Heart left ventricle (tissue), 16 donors: ENCODE measurements at regions of chr14 and their contacts with region 1.

Region 1: DNA sequence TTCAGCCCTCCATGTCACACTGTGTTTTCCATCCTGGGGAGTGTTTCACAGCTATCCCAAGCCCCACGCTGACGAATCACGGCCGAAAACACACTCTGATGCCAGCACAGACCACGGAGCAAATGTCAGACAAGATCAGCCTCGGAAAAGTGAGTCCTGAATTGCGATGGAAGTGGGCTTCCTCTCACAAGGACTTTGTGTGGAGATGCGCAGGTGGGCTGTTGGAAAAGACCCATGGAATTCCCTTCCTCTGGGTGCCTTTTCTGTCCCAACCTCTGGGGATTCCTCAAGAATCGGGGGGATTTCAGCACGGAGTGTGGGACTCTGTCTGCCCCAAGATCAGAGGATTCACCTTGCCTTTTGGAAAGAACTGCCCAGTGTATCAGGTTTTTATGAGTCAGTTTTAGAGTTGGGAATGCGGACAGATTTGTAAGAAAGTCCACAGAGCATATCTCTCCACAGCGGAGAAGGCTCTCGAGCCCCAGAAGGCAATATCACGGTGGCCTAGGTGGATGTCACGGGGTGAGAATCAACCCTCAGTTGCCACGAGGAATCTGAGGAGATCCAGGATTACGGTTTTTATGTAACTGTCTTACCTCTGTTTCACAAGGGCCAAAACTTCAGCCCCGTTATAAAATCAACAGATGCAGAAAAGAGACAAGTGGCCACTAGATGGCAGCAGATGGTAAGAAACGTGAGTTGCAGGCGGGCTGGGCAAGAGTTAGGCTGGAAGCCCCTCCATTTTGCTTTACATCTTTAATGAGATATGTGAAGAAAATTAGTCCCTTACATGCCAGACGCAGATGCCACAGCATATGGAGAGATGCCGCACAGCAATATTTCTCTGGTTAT is 201.9 kb downstream of the DAD1 start:
- DNase-seq: peak in 4 of 5 donors; percentile 56 to 66 (median 60)
- ATAC-seq: peak in 3 of 4 donors; percentile 50 to 66 (median 60)
- H3K4me3 ChIP-seq: no peak overlapping the region
- H3K27ac ChIP-seq: no peak overlapping the region
- H3K4me1 ChIP-seq: peaks cover 0 to 8% (median 0%) of the 10 kb centered on the region in 12 donors
- H3K27me3 ChIP-seq: peaks cover 0 to 29% (median 0%) of the 10 kb centered on the region in 9 donors
- CTCF ChIP-seq: peak; percentile 67 to 90 (median 84)
- POLR2A ChIP-seq: no peak

Region 2: DNA sequence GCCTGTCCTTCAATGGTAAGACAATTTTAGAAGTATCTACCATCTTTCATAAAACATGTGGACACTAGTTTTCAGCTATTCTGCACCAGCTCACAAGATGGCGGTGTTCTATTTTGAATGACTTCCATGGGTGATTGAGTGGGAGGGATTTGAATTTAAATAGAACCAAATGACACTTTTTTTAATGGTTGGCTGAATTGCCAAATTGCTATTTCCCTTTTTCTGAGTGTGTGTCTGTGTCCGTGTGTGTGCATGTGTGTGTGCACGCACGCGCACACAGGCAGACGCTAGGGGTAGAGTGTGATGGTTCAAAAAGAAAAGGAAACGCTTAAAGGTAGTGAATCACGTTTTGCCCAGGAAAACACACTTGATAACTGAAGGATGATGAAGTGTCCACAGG is 160.8 kb before region 1 on chr14:
- intact Hi-C with region 1: no loop called
- DNase-seq: no peak
- ATAC-seq: no peak
- H3K4me3 ChIP-seq: no peak overlapping the region
- H3K27ac ChIP-seq: no peak overlapping the region
- H3K4me1 ChIP-seq: no peaks in the 10 kb centered on the region
- H3K27me3 ChIP-seq: peaks cover 0 to 8% (median 0%) of the 10 kb centered on the region in 9 donors
- CTCF ChIP-seq: peak in 2 of 12 donors; percentile 17 to 26
- POLR2A ChIP-seq: no peak

Region 3: DNA sequence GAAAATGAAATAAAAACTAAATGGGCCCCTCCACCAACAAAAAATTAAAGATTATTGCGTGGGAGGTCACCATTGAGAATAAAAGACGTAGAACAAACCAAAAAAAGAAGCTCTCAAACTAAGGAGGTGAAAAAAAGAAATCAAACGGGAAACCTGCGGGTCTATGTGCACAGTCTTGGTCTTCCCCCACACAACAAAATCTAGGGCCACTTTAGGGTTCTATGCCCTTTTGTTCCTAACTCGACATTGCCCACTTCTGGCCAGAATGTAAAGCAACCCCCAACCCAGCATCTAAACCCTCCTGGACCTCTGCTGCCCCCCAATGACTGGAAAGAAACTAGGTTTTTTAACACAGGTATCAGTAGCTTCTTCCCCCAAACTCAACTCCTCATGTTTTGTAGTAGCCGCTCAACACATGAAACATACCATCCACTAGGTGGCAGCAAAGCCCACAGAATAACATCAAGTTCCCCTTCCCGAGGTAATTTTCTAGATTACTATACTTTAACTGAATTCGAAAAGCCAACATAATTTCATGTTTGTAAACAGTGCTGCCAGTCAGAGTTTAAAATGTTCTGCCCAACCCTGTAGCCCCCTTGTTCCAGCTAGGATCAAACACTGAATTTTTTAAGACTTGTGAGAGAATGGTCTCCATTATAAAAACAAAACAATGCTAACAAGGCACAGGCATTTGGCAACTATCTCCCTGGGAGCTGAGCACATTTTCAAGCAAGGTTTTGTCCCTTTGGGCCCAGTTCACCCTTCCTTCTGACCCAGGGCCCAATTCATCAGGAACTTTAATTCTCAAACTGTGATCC is 183.2 kb after region 1 on chr14:
- intact Hi-C with region 1: loop called in 2 of 10 experiments (anchors 5 kb)
- DNase-seq: peak in 3 of 5 donors; percentile 52 to 78 (median 77)
- ATAC-seq: peak; percentile 47 to 81 (median 72)
- H3K4me3 ChIP-seq: peak overlapping the region in 1 of 12 donors; percentile 23
- H3K27ac ChIP-seq: peak overlapping the region in 5 of 12 donors; percentile 9 to 83 (median 30)
- H3K4me1 ChIP-seq: peaks cover 0 to 48% (median 8%) of the 10 kb centered on the region in 12 donors
- H3K27me3 ChIP-seq: no peaks in the 10 kb centered on the region
- CTCF ChIP-seq: peak; percentile 70 to 86 (median 78)
- POLR2A ChIP-seq: no peak

Region 4: DNA sequence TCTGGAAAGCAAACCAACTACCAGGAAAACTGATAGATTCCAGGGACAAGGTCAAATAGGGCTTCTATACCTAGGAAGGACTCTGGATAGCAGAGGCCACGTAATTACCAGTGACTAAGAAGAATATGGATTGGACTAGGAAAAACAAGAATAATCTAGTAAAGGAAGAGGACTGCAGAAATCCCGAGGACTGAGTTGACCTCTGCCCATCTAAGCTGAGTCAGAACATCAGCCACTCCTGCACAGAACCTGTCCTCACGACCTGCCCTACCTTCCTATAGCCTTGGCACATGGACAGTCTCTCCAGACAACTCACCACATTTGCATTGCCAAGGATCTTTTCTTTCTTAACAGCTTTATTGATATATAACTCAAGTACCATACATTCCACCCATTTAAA is 254.7 kb after region 1 on chr14:
- intact Hi-C with region 1: loop called in 1 of 10 experiments (anchors 5 kb)
- DNase-seq: no peak
- ATAC-seq: no peak
- H3K4me3 ChIP-seq: no peak overlapping the region
- H3K27ac ChIP-seq: no peak overlapping the region
- H3K4me1 ChIP-seq: peaks cover 0 to 7% (median 0%) of the 10 kb centered on the region in 12 donors
- H3K27me3 ChIP-seq: no peaks in the 10 kb centered on the region
- CTCF ChIP-seq: no peak
- POLR2A ChIP-seq: no peak

Region 5: DNA sequence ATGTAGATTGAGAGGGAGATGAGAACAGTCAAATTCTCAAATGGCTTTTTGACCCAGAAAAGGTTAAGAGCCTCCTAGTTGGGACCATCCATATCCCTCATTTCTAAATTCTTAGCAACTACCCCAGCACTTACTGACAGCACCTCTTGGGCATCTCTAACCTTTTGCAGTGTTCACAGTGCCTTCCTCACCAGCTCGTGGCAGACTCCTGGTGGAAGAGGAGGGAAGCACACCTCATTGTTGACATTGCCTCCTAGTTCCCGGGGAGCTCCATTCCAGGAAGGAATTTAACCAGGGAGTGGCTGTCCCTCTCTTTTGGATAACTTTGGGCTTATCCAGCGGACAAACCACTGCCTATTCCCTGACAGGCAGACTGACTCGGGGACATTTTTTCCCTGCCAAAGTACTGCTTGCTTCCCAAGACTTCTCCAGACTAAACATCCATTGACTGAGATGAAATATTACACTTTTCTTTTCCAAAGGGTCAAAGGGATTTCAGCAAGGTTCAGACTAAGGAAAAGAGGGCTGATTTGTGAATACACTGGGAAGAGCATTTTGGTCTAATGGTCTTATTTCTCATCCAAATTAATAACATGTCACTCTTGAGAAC is 266.0 kb after region 1 on chr14:
- intact Hi-C with region 1: loop called (anchors 2 to 5 kb)
- DNase-seq: peak in 4 of 5 donors; percentile 31 to 53 (median 48)
- ATAC-seq: peak in 3 of 4 donors; percentile 81 to 89 (median 86)
- H3K4me3 ChIP-seq: no peak overlapping the region
- H3K27ac ChIP-seq: no peak overlapping the region
- H3K4me1 ChIP-seq: peaks cover 0 to 2% (median 0%) of the 10 kb centered on the region in 12 donors
- H3K27me3 ChIP-seq: no peaks in the 10 kb centered on the region
- CTCF ChIP-seq: peak; percentile 65 to 80 (median 70)
- POLR2A ChIP-seq: no peak

Region 6: GRCh38 chr14:22822571-22823098 is 435.5 kb after region 1 on chr14:
- intact Hi-C with region 1: loop called in 4 of 10 experiments (anchors 5 to 10 kb)
- DNase-seq: peak; percentile 72 to 86 (median 79)
- ATAC-seq: peak; percentile 76 to 91 (median 85)
- H3K4me3 ChIP-seq: peak overlapping the region in 11 of 12 donors; percentile 14 to 59 (median 51)
- H3K27ac ChIP-seq: peak overlapping the region in 7 of 12 donors; percentile 11 to 70 (median 24)
- H3K4me1 ChIP-seq: peaks cover 0 to 54% (median 21%) of the 10 kb centered on the region in 12 donors
- H3K27me3 ChIP-seq: no peaks in the 10 kb centered on the region
- CTCF ChIP-seq: peak; percentile 71 to 98 (median 92)
- POLR2A ChIP-seq: no peak

Region 7: DNA sequence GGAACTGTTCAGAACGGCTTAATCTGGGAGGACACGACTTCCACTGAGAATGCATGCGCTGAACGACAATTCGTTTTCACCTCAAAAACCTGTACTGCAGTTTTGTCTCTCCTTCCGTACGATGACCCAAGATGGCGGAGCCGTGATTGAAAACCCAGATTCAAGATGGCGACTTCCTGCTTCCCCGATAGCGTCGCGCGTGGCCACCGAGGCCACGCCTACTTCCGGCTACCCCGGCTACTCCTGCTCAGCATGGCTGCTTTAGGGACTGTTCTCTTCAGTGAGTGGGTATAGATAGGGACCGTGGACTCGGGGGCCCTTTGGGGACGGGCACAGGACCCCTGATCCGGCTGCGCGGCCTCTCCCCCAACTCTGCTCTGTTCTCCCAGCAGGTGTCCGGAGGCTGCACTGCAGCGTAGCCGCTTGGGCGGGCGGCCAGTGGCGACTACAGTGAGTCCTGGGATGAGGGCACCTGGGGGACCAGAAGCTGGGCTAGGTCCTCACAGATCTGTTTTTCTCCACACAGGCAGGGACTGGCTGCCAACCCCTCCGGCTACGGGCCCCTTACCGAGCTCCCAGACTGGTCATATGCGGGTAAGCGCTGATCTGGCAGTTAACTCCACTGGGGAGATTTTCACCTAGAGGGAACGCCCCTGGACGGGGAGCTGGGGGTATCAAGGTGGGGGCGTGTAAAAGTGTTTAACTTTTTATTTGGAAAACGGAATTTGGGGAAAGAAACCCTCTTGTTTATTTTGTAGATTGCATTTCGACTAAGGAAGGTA is 442.7 kb after region 1 on chr14 and contains the start of gene MRPL52:
- intact Hi-C with region 1: loop called in 3 of 10 experiments (anchors 10 kb)
- DNase-seq: peak; percentile 91 to 94 (median 92)
- ATAC-seq: peak; percentile 88 to 98 (median 98)
- H3K4me3 ChIP-seq: peak within 1 kb of the TSS; percentile 66 to 93 (median 78)
- H3K27ac ChIP-seq: peak within 1 kb of the TSS; percentile 53 to 87 (median 80)
- H3K4me1 ChIP-seq: peaks cover 0 to 17% (median 11%) of the 10 kb centered on the region in 12 donors
- H3K27me3 ChIP-seq: no peaks in the 10 kb centered on the region
- CTCF ChIP-seq: no peak
- POLR2A ChIP-seq: peak in 1 of 2 donors; percentile 20
- total RNA-seq, gene MRPL52: 80.4 to 185 (median 107) TPM